ENCODE measurements at regions of chr7 and their contacts with region 1.

Region 1: GRCh38 chr7:74449809-74450397 is 3.8 kb upstream of the GTF2IRD1 start:
- DNase-seq: no peak
- ATAC-seq: peak; percentile 49

Region 2: GRCh38 chr7:74502181-74502891 is 52.4 kb after region 1 on chr7:
- intact Hi-C with region 1: loop called (anchors 5 kb)
- DNase-seq: no peak
- ATAC-seq: peak; percentile 29

Region 3: DNA sequence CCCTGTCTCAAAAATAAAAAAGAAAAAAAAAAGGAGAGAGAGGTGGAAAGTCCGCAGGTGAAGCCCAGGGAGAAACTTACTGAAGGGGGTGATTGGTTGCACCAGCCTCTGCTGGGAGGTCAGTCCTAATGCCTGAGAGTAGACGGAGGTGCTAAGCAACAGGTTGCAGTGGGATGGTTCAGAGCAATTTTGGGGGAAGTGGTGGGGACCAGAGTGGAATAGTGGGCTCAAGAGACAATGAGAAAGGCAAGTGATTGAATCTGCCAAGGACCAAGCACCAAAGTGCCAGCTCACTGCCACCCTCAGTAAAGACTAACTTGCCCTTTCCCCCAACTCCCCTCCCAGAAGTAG is 117.4 kb after region 1 on chr7:
- intact Hi-C with region 1: loop called (anchors 2 kb)
- DNase-seq: no peak
- ATAC-seq: no peak

Measured in Right ventricle myocardium inferior (tissue), 1 donor.